ENCODE measurements at regions of chr15 and their contacts with region 1.

Region 1: GRCh38 chr15:86284635-86285034 is 205.0 kb downstream of the AGBL1 start:
- DNase-seq: no peak
- ATAC-seq: no peak
- H3K4me3 ChIP-seq: no peak overlapping the region
- H3K27ac ChIP-seq: no peak overlapping the region
- H3K4me1 ChIP-seq: no peaks in the 10 kb centered on the region
- H3K27me3 ChIP-seq: no peaks in the 10 kb centered on the region

Region 2: DNA sequence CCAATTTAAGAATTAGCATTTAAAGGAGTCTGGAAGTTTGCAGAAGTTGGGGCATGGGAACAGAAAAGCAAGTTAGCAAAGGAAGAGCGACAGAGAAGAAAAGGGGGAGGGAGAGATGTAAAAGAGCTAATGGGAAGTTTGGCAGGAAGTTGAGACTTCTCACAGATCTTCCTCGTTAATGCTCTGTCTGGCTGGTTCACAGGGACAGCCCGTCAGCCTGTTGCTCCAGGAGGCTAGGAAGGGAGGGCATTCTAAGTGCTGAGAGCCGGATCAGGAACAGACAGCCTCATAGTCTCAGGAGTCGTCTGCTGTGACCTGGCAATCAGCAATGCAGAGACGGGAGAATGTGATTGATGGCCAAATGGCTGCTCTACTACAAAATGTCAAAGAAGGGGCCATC is 54.7 kb before region 1 on chr15:
- intact Hi-C with region 1: loop called in 1 of 4 experiments (anchors 10 kb)
- DNase-seq: no peak
- ATAC-seq: no peak
- H3K4me3 ChIP-seq: no peak overlapping the region
- H3K27ac ChIP-seq: no peak overlapping the region
- H3K4me1 ChIP-seq: no peaks in the 10 kb centered on the region
- H3K27me3 ChIP-seq: no peaks in the 10 kb centered on the region

Measured in right cardiac atrium (tissue), 5 donors.